MCF 10A (cell line): ENCODE measurements at regions of chr3 and their contacts with region 1.

Region 1: DNA sequence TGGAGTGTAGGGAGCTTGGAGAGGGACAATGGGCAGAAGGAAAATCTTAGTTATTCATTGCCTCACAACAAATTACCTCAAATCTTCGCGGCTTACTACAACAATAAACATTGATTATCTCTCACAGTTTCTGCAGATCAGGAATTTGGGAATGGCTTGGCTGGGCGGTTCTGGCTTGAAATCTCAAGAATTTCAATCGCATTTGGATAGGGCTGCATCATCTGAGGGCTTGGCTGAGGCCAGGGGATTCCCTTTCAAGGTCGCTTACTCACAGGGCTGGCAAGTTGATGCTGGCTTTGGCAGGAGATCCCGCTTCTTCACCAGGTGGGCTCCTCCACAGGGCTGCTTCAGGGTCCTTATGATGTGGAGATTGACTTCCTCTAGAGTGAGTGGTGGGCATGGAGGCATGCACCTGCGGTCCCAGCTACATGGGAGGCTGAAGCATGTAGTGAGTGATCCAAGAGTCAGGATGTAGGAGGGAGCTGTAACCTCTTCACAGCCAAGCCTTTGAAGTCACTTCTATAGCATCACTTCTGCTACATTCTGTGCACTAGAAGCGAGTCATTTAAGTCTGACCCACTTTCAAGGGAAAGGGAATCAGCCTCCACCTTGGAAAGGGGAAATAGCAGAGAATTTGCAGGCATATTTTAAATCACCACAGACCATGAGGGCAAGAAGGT is 63.1 kb downstream of the CDC25A start:
- DNase-seq: peak; percentile 49
- H3K4me3 Mint-ChIP-seq: no peak overlapping the region
- H3K27ac Mint-ChIP-seq: no peak overlapping the region
- H3K4me1 Mint-ChIP-seq: peaks cover 6% of the 10 kb centered on the region
- H3K27me3 Mint-ChIP-seq: no peaks in the 10 kb centered on the region
- CTCF ChIP-seq: no peak

Region 2: DNA sequence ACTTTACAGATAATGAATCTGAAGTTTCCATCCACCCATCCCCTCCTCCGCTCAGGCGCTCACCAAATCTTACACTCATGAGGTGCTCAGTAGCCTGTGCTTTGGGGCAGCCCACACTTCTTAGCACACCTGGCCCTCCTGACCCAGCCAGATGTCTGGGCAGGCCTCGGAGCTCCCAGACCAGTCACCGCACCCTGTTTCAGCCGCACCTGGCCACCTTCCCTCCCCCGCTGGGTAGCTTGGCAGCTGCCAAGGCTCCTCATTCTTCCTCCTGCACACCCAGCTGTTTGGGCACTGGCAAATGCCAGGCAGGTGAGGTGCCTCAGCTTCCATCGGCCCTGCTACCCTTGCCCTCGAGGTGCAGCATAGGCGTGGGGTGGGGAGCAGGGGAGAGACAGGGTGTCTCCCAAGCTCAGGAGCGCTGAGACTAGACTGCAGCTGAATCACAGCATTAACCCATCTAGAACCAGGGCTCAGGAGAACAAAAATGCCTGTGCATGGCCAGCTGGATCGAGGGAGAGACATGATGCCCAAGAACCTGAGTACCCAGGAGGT is 17.2 kb after region 1 on chr3:
- CTCF ChIA-PET with region 1: no interaction called
- POLR2A ChIA-PET with region 1: interaction called, 10 read pairs
- intact Hi-C with region 1: no loop called
- DNase-seq: peak; percentile 56
- H3K4me3 Mint-ChIP-seq: peak overlapping the region; percentile 21
- H3K27ac Mint-ChIP-seq: peak overlapping the region; percentile 57
- H3K4me1 Mint-ChIP-seq: peaks cover 15% of the 10 kb centered on the region
- H3K27me3 Mint-ChIP-seq: no peaks in the 10 kb centered on the region
- CTCF ChIP-seq: no peak